ENCODE measurements at regions of chr18 and their contacts with region 1.

Region 1: GRCh38 chr18:51110073-51110803 is 80.2 kb downstream of the SMAD4 start:
- DNase-seq: peak; percentile 31 to 52
- ATAC-seq: peak; percentile 98 to 99
- H3K4me3 ChIP-seq: no peak overlapping the region
- H3K27ac ChIP-seq: peak overlapping the region in 1 of 2 experiments; percentile 60; a peak in 2 of 6 replicates
- H3K4me1 ChIP-seq: peaks cover 6% of the 10 kb centered on the region; the same call in 2 of the 3 replicates
- CTCF ChIP-seq: peak; percentile 69
- EP300 ChIP-seq: no peak
- POLR2A ChIP-seq: no peak
- RAD21 ChIP-seq: peak; percentile 88 to 94

Region 2: DNA sequence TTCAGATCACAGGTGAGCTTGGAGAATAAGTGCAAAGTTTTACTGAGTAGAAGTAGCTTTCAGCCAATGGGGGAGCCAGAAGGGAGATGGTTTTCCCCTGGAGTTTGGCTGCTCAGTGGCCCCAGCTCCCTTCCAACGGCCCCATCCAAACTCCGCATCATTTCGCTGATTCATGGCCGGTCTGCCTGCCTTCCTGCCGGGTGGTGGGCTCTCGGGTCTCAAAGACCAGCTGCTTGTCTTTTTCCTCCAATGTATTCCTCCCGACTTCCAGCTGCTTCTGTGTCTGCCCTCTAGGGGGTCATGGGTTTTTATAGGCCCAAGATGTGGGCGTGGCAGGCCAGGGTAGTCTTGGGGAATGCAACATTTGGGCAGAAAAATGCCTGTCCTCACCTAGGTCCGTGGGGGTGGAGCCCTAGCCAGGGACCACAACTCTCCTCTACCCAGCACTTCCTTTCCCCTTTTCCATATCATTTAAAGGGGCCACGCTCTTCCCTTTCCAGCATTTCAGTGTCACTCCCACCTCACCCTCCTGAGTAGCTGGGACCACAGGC is 13.8 kb after region 1 on chr18:
- CTCF ChIA-PET with region 1: interaction called, 13 read pairs
- POLR2A ChIA-PET with region 1: no interaction called
- DNase-seq: no peak
- ATAC-seq: no peak
- H3K4me3 ChIP-seq: no peak overlapping the region
- H3K27ac ChIP-seq: no peak overlapping the region
- H3K4me1 ChIP-seq: no peaks in the 10 kb centered on the region
- CTCF ChIP-seq: no peak
- EP300 ChIP-seq: no peak
- POLR2A ChIP-seq: no peak
- RAD21 ChIP-seq: no peak

Region 3: DNA sequence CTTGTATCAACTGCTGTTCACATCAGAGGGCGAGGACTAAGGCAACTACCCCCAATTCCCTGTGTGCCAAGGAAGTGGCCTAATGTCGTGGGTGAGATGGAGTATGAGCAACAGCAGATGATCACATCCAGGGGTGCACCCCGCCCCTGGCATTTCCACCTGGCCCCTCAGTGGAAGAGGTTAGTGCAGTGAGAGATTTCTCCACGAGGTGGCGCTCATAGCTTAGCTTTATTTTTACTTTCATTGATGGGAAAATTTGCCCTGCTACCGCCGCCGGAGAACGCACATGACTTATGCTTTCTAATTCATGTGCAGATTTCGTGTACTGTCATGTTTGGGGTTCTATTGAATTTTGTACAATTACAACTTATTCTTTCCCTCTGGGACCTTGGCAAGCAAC is 557.9 kb after region 1 on chr18:
- CTCF ChIA-PET with region 1: interaction called, 10 read pairs
- POLR2A ChIA-PET with region 1: no interaction called
- DNase-seq: peak; percentile 11 to 40
- ATAC-seq: peak; percentile 76 to 77
- H3K4me3 ChIP-seq: no peak overlapping the region
- H3K27ac ChIP-seq: no peak overlapping the region
- H3K4me1 ChIP-seq: 0 out of 3 replicates have a peak, but pooled peaks cover 4% of the 10 kb centered on the region
- CTCF ChIP-seq: peak; percentile 65
- EP300 ChIP-seq: no peak
- POLR2A ChIP-seq: no peak
- RAD21 ChIP-seq: peak; percentile 76